Breast epithelium (tissue), 4 donors: ENCODE measurements at regions of chr4 and their contacts with region 1.

Region 1: GRCh38 chr4:163111593-163111992 is 55.1 kb downstream of the NAF1 start:
- DNase-seq: no peak
- H3K4me3 ChIP-seq: no peak overlapping the region
- H3K27ac ChIP-seq: no peak overlapping the region
- H3K4me1 ChIP-seq: no peaks in the 10 kb centered on the region
- H3K27me3 ChIP-seq: no peaks in the 10 kb centered on the region
- CTCF ChIP-seq: no peak
- POLR2A ChIP-seq: no peak

Region 2: DNA sequence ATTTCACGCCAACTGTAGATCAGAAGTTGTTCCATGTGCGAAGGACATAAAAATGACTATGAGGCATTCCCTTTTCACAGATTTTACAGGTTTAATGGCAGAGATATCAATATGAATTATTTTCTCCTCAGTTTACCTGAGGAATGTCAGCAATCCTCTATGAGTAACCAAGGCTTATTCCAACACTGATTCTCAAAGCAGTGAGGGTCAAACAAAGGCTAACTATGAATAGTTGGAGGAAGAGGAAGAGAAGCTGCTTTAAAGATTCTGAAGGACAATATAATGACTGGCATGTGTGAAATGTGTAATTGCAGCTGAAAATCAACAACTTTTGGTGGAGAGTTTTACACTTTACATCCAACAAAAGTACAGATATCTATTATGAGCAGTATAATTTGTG is 26.0 kb after region 1 on chr4:
- intact Hi-C with region 1: no loop called
- DNase-seq: no peak
- H3K4me3 ChIP-seq: no peak overlapping the region
- H3K27ac ChIP-seq: no peak overlapping the region
- H3K4me1 ChIP-seq: no peaks in the 10 kb centered on the region
- H3K27me3 ChIP-seq: no peaks in the 10 kb centered on the region
- CTCF ChIP-seq: no peak
- POLR2A ChIP-seq: no peak

Region 3: GRCh38 chr4:163414281-163414680 is 302.7 kb after region 1 on chr4:
- intact Hi-C with region 1: loop called (anchors 5 kb)
- DNase-seq: no peak
- H3K4me3 ChIP-seq: no peak overlapping the region
- H3K27ac ChIP-seq: no peak overlapping the region
- H3K4me1 ChIP-seq: no peaks in the 10 kb centered on the region
- H3K27me3 ChIP-seq: no peaks in the 10 kb centered on the region
- CTCF ChIP-seq: no peak
- POLR2A ChIP-seq: no peak